ENCODE measurements at regions of chr5 and their contacts with region 1.

Region 1: GRCh38 chr5:180291943-180292831 is at the start of gene MAPK9:
- DNase-seq: no peak
- H3K4me3 ChIP-seq: peak within 1 kb of the TSS; percentile 70
- H3K27me3 ChIP-seq: no peaks in the 10 kb centered on the region
- CTCF ChIP-seq: no peak
- polyA plus RNA-seq, gene MAPK9: 31.6 and 35.0 TPM in 2 replicates

Region 2: GRCh38 chr5:180304431-180305375 is 12.5 kb after region 1 on chr5:
- CTCF ChIA-PET with region 1: interaction called, 24 read pairs
- POLR2A ChIA-PET with region 1: no interaction called
- DNase-seq: no peak
- H3K4me3 ChIP-seq: no peak overlapping the region
- H3K27me3 ChIP-seq: no peaks in the 10 kb centered on the region
- CTCF ChIP-seq: no peak

Region 3: GRCh38 chr5:180328296-180329137 is 36.3 kb after region 1 on chr5:
- CTCF ChIA-PET with region 1: interaction called, 36 read pairs
- POLR2A ChIA-PET with region 1: no interaction called
- DNase-seq: no peak
- H3K4me3 ChIP-seq: no peak overlapping the region
- H3K27me3 ChIP-seq: no peaks in the 10 kb centered on the region
- CTCF ChIP-seq: peak; percentile 76

Region 4: GRCh38 chr5:180470966-180471582 is 178.9 kb after region 1 on chr5:
- CTCF ChIA-PET with region 1: interaction called, 186 read pairs
- POLR2A ChIA-PET with region 1: no interaction called
- DNase-seq: no peak
- H3K4me3 ChIP-seq: no peak overlapping the region
- H3K27me3 ChIP-seq: no peaks in the 10 kb centered on the region; the same call in none of the 2 replicates
- CTCF ChIP-seq: peak; percentile 91

Measured in BJ (cell line).